Mammary epithelial cell (primary cell): ENCODE measurements at regions of chr22 and their contacts with region 1.

Region 1: DNA sequence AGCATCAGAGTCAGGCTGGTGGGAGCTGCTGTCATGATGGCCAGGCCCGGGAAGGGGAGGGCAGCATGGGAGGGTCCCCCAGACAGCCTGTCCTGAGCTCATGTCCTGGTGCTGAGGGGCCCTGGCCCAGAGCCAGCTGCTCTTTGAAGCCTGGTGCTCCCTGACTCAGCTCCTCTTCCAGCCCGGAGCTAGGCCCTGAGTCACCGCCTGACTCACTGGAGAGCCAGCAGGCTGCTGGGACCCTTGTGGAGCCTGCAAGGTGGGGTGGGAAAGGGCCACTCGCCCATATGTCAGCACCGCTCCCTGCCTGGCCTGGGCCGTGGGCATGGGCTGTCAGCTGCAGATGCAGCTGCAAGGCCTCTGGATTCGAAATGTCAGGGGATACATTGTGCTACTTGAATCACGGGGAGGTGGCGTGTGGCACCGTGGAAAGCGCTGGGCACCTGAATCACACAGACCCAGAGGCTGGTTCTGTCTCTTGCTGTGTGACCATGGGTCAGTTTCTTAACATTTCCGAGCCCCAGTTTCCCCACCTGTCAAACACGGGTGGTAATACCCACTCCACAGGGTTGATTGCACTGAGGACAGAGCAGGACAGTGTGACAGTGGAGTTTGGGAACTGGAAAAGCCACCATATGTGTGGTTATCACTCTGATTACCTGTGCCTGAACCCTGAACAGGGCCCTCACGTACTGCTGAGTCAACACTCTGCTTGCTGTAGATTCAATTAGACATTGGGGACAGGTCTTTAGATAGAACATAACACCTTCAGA is 4.4 kb downstream of the CACNA1I start:
- DNase-seq: peak; percentile 80
- H3K4me3 ChIP-seq: no peak overlapping the region
- H3K27ac ChIP-seq: no peak overlapping the region
- H3K4me1 ChIP-seq: peaks cover 11% of the 10 kb centered on the region
- H3K27me3 ChIP-seq: no peaks in the 10 kb centered on the region
- CTCF ChIP-seq: no peak

Region 2: DNA sequence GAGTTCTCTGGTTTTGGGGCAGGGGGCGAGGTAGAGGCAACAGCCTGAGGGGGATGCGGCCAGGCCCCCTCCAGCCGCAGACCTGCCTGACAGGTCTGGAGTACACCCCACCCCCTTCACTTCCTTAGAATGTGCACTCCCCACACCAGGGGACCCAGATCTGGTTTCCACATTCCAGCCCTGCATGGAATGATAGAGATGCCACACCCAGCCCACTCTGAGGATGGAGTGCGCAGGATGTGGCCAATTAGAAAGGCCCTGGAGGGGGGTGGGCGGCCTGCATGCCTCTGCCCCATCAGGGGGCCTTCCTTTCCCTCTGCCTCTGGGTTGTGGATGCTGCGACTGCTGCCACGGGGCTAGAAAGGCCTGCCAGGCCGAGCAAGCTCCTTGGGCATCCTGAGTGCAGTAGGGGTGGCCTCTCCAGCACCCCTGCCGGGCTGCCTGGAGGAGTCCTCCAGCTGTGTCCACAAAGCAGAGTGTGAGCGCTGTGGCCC is 146.3 kb before region 1 on chr22:
- CTCF ChIA-PET with region 1: no interaction called
- dilution Hi-C with region 1: no loop called
- in situ Hi-C with region 1: no loop called
- intact Hi-C with region 1: no loop called
- DNase-seq: no peak
- H3K4me3 ChIP-seq: no peak overlapping the region
- H3K27ac ChIP-seq: no peak overlapping the region
- H3K4me1 ChIP-seq: peaks cover 11% of the 10 kb centered on the region
- H3K27me3 ChIP-seq: no peaks in the 10 kb centered on the region
- CTCF ChIP-seq: no peak

Region 3: GRCh38 chr22:39651053-39651996 is 76.4 kb after region 1 on chr22:
- CTCF ChIA-PET with region 1: no interaction called
- dilution Hi-C with region 1: loop called (anchors 5 kb)
- in situ Hi-C with region 1: no loop called
- intact Hi-C with region 1: no loop called
- DNase-seq: no peak
- H3K4me3 ChIP-seq: no peak overlapping the region
- H3K27ac ChIP-seq: no peak overlapping the region
- H3K4me1 ChIP-seq: no peaks in the 10 kb centered on the region
- H3K27me3 ChIP-seq: no peaks in the 10 kb centered on the region
- CTCF ChIP-seq: no peak

Region 4: DNA sequence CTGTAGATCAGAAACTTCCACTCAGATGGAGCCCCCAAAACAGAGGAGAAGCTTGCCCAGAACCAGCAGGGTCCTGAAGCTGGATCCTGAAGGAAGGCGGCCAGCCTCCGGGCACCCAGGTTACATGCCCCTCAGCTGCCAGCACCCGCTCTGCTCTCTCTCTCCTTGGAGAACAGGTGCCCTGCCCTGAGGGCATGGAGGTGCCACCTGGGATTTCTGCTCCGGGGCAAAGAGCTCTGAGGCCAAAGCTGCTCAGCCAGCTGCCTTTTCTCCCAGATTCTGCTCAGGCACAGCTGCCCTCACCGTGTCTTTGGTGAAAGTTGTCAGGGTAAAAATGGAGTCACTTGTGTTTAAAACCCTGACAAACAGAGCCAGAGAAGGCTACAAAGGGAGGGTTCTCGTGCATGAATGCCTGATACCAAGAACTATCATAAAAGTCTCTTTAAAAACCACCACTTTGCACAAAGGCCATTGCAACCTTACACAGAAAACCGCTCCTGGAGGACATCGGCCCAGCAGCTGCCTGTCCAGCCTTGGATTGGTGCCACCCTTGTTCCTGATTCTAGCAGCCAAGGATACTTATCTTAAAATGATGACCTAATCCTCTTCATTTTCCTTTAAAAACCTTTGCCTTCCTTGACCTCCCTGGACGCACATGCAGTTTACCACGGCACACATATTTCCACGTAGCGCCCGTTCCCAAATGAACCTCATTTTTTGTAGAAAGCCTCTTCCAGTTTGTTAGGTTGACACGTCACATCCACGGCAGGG is 135.6 kb after region 1 on chr22:
- CTCF ChIA-PET with region 1: no interaction called
- dilution Hi-C with region 1: no loop called
- in situ Hi-C with region 1: no loop called
- intact Hi-C with region 1: no loop called
- DNase-seq: no peak
- H3K4me3 ChIP-seq: no peak overlapping the region
- H3K27ac ChIP-seq: no peak overlapping the region
- H3K4me1 ChIP-seq: no peaks in the 10 kb centered on the region
- H3K27me3 ChIP-seq: no peaks in the 10 kb centered on the region
- CTCF ChIP-seq: no peak